Endothelial cell of umbilical vein (primary cell): ENCODE measurements at regions of chr7 and their contacts with region 1.

Region 1: DNA sequence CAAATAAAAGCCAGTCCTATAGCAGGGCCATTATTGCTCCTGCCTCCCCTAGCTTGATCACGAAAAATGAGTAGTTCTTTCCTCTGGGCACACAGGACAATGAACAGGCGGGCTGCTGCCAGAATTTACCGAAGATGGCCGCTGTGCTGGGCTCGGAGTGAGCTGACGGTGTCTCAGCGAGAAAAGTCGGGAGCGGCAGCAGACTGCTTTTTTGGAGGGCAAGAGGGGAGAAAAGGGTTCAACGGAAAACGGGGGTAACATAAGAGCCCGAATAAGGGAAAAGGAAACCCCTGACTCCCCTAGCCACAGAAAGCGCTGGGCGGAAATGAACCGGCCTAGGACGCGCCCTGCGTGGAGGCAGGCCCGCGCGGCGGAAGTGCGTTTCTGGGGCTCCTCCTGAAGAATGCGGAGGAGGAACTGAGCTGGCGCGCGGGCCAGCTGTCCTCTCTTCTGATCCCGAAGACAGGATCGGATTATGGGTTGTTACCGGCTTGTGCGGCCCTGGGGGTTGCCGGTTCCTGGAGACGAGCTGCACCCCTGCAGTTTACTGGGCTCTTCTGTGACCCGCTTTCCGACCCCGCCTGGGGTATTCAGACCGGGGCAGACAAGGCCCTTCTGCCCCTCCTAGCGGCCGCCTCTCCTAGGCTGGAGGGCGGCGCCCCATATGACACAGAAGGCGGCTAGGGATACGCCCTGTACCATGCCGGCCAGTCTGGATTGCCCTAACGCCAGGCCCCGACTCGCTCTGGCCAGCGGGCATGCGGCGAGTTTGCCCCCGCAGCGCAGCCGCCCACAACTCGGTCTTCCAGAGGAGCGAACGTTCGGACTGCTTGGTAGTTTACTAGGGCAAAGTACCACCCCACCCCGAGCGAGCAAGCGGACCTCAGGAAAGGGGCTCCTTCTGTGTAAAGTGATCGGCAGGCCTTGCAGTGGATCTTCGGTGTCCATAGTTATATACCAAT is 30.1 kb upstream of the KMT2E start:
- DNase-seq: peak; percentile 91
- H3K4me3 ChIP-seq: peak overlapping the region; percentile 34 to 71 (median 49)
- H3K27ac ChIP-seq: peak overlapping the region; percentile 98
- H3K4me1 ChIP-seq: peaks cover 56% of the 10 kb centered on the region
- H3K27me3 ChIP-seq: no peaks in the 10 kb centered on the region
- CTCF ChIP-seq: peak; percentile 26 to 64
- POLR2A ChIP-seq: peak; percentile 97

Region 2: DNA sequence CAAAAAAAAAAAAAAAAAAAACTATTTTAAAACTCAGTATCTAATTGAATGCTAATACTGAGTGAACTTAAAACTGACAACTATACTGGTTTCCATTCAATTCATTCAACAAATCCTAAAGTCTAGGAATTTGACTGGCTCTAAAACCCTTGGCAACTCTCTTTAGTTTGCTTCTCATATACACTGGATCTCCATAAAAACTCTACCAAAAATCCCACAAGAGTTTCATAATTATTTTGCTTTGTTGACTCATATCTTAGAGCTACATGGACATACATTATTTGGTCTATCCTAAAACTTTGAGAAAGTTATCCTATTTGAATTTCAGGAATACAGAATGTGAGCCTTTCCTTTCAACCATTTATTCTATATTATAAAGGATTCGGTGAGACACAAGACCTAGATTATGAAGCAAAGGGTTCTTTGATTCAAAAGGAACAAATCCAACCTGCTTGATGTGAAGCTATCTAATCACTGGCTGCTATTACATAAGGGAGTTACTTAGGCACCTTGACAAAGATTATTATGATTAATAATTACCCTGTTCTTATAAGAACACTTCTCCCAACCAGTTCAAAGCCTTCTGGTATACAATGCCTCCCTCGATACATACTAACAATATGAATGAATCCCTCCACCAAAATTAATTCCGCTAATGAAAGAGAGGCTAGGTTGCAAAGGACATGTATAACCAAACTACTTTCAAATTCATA is 14.3 kb after region 1 on chr7:
- CTCF ChIA-PET with region 1: interaction called, 7 read pairs
- POLR2A ChIA-PET with region 1: no interaction called
- dilution Hi-C with region 1: no loop called
- intact Hi-C with region 1: loop called (anchors 1 kb)
- DNase-seq: no peak
- H3K4me3 ChIP-seq: no peak overlapping the region
- H3K27ac ChIP-seq: no peak overlapping the region
- H3K4me1 ChIP-seq: peaks cover 16% of the 10 kb centered on the region
- H3K27me3 ChIP-seq: no peaks in the 10 kb centered on the region
- CTCF ChIP-seq: no peak
- POLR2A ChIP-seq: no peak

Region 3: GRCh38 chr7:105046414-105046813 is 62.6 kb after region 1 on chr7:
- CTCF ChIA-PET with region 1: interaction called, 17 read pairs
- POLR2A ChIA-PET with region 1: no interaction called
- dilution Hi-C with region 1: no loop called
- intact Hi-C with region 1: loop called (anchors 2 kb)
- DNase-seq: no peak
- H3K4me3 ChIP-seq: no peak overlapping the region
- H3K27ac ChIP-seq: no peak overlapping the region
- H3K4me1 ChIP-seq: no peaks in the 10 kb centered on the region
- H3K27me3 ChIP-seq: no peaks in the 10 kb centered on the region
- CTCF ChIP-seq: no peak
- POLR2A ChIP-seq: no peak

Region 4: GRCh38 chr7:105098863-105099515 is 115.1 kb after region 1 on chr7:
- CTCF ChIA-PET with region 1: interaction called, 13 read pairs
- POLR2A ChIA-PET with region 1: no interaction called
- dilution Hi-C with region 1: no loop called
- intact Hi-C with region 1: loop called (anchors 2 kb)
- DNase-seq: peak; percentile 38
- H3K4me3 ChIP-seq: no peak overlapping the region
- H3K27ac ChIP-seq: peak overlapping the region; percentile 60
- H3K4me1 ChIP-seq: peaks cover 24% of the 10 kb centered on the region
- H3K27me3 ChIP-seq: no peaks in the 10 kb centered on the region
- CTCF ChIP-seq: no peak
- POLR2A ChIP-seq: no peak

Region 5: GRCh38 chr7:105487579-105488571 is 504.0 kb after region 1 on chr7:
- CTCF ChIA-PET with region 1: no interaction called
- POLR2A ChIA-PET with region 1: no interaction called
- dilution Hi-C with region 1: no loop called
- intact Hi-C with region 1: loop called (anchors 1 kb)
- DNase-seq: peak; percentile 100
- H3K4me3 ChIP-seq: peak overlapping the region in 1 of 3 experiments; percentile 10
- H3K27ac ChIP-seq: peak overlapping the region; percentile 98
- H3K4me1 ChIP-seq: peaks cover 29% of the 10 kb centered on the region
- H3K27me3 ChIP-seq: no peaks in the 10 kb centered on the region
- CTCF ChIP-seq: peak; percentile 22 to 39
- POLR2A ChIP-seq: peak; percentile 78